ENCODE measurements at regions of chr1 and their contacts with region 1.

Region 1: DNA sequence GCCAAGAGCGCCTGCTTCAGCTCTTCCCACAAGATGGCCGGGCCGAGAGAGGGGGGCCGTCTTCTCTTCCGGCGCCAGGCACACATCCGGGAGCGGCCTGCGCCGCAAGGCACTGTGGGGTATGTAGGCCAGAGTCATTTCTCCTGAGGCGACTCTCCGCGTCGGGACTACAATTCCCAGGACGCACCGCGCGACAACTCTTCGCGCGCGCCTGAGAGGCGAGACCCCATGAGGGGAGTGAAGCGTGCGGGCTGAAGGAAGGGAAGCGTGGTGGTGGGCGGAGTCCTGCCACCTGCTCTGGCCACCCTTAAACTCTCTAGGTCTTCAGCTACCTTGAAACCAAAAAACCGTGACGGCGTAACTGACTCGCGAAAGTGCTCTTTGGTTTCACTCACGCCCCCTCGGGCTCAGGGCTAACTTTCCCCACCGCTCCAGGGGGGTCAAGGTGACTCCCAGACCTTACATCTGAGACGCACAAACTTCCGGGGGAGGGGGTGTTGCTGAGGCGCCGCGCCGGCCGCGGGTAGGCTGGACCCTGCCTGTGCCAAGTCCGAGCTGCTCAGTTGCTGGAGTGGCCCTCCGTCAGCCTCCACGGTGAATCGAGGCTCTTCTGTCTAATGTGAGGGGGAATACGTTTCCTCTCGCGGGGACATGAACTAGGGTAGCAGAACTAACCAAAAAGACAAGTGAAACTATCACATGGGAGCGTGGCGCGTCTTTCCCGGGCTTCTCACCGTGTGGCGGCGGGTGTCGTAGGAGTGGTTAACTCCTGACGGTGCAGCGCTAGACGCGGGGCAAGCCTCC is at the start of gene SERBP1:
- DNase-seq: peak; percentile 99
- H3K4me3 ChIP-seq: peak within 1 kb of the TSS; percentile 99
- H3K27ac ChIP-seq: peak within 1 kb of the TSS; percentile 96
- H3K4me1 ChIP-seq: peaks cover 38% of the 10 kb centered on the region
- CTCF ChIP-seq: no peak; the same call in 1 of the 2 replicates
- total RNA-seq, gene SERBP1: 270 and 443 TPM in 2 replicates

Region 2: GRCh38 chr1:66271216-66271903 is 1159.2 kb before region 1 on chr1:
- CTCF ChIA-PET with region 1: no interaction called
- POLR2A ChIA-PET with region 1: no interaction called
- intact Hi-C with region 1: loop called (anchors 10 kb)
- DNase-seq: peak; percentile 88
- H3K4me3 ChIP-seq: peak overlapping the region; percentile 37
- H3K27ac ChIP-seq: peak overlapping the region; percentile 82
- H3K4me1 ChIP-seq: peaks cover 60% of the 10 kb centered on the region
- CTCF ChIP-seq: no peak

Region 3: DNA sequence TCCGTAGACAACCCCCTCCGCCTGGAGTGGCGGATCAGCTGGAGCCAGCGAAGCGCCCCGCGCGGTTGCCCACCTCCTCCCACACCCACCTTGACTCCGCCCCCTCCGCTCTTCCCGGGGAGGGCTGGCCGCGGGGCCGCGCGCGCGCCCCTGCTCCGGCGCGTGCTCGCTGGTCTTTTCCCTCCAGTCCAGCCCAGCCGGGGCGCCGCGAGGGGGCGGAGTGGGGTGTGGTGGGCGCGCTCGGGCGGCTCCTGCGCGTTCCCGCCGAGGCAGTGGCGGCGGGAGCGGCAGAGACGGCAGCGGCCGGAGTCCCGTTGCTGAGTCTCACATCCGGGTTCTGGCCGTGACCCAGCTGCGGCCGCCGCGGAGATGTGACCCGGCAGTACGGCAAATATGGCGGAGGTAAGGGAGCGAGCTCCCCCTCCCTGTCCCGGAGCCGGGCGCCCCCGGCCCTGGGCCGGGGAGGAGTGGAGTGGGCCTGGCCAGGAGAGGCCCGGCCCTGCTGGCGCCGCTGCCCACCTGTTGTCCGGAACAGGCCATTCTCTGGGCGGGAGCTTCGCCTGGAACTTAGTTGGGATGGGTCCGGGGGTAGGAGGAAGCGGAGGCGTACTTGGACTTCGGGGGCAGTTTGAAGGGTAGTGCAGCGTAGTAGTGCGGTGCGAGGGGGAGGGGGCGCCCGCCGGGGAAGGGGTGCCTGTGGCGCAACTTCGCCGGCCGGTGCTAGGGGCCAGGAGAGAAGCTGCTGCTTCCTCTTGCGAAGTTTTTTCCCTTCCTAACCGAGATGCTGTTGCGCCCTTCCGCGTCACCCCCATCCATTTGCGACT is 500.3 kb before region 1 on chr1:
- CTCF ChIA-PET with region 1: no interaction called
- POLR2A ChIA-PET with region 1: interaction called, 4 read pairs
- intact Hi-C with region 1: loop called (anchors 2 kb)
- DNase-seq: peak; percentile 96
- H3K4me3 ChIP-seq: peak overlapping the region; percentile 98
- H3K27ac ChIP-seq: peak overlapping the region; percentile 86
- H3K4me1 ChIP-seq: peaks cover 60% of the 10 kb centered on the region
- CTCF ChIP-seq: peak; percentile 36; the same call in 1 of the 2 replicates

Region 4: GRCh38 chr1:67332653-67333529 is 97.7 kb before region 1 on chr1:
- CTCF ChIA-PET with region 1: no interaction called
- POLR2A ChIA-PET with region 1: no interaction called
- intact Hi-C with region 1: no loop called
- DNase-seq: no peak
- H3K4me3 ChIP-seq: no peak overlapping the region
- H3K27ac ChIP-seq: no peak overlapping the region
- H3K4me1 ChIP-seq: no peaks in the 10 kb centered on the region
- CTCF ChIP-seq: no peak

Region 5: GRCh38 chr1:67407498-67407897 is 23.1 kb before region 1 on chr1:
- CTCF ChIA-PET with region 1: no interaction called
- POLR2A ChIA-PET with region 1: interaction called, 20 read pairs
- intact Hi-C with region 1: loop called (anchors 2 kb)
- DNase-seq: no peak
- H3K4me3 ChIP-seq: no peak overlapping the region
- H3K27ac ChIP-seq: no peak overlapping the region
- H3K4me1 ChIP-seq: no peaks in the 10 kb centered on the region
- CTCF ChIP-seq: no peak

Region 6: GRCh38 chr1:67500413-67500959 is 69.9 kb after region 1 on chr1:
- CTCF ChIA-PET with region 1: no interaction called
- POLR2A ChIA-PET with region 1: interaction called, 6 read pairs
- intact Hi-C with region 1: loop called (anchors 2 kb)
- DNase-seq: peak; percentile 89
- H3K4me3 ChIP-seq: no peak overlapping the region
- H3K27ac ChIP-seq: no peak overlapping the region
- H3K4me1 ChIP-seq: no peaks in the 10 kb centered on the region
- CTCF ChIP-seq: peak; percentile 97

Region 7: GRCh38 chr1:67741121-67741520 is 310.6 kb after region 1 on chr1:
- CTCF ChIA-PET with region 1: no interaction called
- POLR2A ChIA-PET with region 1: interaction called, 5 read pairs
- intact Hi-C with region 1: loop called (anchors 5 kb)
- DNase-seq: no peak
- H3K4me3 ChIP-seq: no peak overlapping the region
- H3K27ac ChIP-seq: peak overlapping the region; percentile 84
- H3K4me1 ChIP-seq: peaks cover 78% of the 10 kb centered on the region
- CTCF ChIP-seq: 0 out of 2 replicates have a peak, but pooled peaks have one; percentile 2